Gastrocnemius medialis (tissue), 4 donors: ENCODE measurements at regions of chr15 and their contacts with region 1.

Region 1: DNA sequence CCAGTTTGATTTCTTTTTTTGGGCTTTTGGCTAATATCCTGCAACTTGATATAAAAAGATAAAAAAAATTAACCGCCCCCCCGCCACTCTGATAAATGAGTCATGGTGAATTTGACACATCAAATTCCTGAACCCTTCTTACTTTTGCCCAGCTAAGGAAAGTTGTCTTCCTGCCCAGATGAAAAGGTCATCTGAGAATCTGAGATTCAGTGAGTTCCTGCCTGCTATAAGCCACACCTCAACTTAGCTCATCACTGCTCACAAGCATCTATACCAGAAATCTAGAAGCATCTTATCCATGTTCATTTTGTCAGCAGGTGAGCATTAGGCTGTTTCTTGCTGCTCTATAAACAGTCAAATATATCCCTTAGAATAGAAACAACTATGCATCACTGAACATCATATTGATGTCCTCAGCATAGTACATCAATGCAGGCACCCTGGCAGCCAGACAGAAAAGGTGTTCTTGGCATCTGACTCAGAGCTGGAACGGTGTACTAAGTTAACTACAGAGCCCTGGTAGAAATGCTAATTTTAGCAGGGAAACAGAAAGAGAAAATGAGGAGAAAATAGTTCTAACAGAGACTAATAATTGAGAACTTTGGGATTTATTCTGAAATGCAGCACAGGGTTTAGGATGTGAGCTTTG is 77.1 kb downstream of the SEMA6D start:
- DNase-seq: no peak
- ATAC-seq: no peak
- H3K4me3 ChIP-seq: no peak overlapping the region
- H3K27ac ChIP-seq: no peak overlapping the region
- H3K4me1 ChIP-seq: peaks cover 8 to 21% of the 10 kb centered on the region in 2 donors
- H3K27me3 ChIP-seq: no peaks in the 10 kb centered on the region
- CTCF ChIP-seq: no peak
- POLR2A ChIP-seq: no peak

Region 2: DNA sequence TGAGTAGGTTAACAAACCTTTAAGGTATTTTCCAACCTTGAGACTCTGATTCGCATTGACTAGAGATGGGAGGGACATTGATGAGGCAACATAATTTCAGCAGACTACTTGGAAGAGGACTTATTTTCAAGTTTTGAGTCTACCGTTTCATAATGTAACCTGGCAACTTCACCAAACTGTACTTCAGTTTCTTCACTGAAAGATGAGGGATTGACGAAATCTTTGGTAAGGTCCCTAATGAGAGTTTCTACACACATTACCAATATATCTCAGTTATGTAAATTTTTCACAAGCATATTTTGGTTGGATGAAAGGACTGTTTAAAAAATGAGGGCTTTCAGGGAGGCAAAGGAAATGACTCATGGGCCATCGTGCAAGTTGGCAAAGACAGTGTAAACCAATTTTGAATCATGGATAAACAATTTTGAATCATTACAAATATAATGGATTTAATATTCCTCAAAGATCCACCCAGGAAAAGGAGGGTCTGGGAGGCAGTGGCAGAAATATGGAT is 105.8 kb before region 1 on chr15:
- in situ Hi-C with region 1: no loop called
- intact Hi-C with region 1: no loop called
- DNase-seq: no peak
- ATAC-seq: no peak
- H3K4me3 ChIP-seq: no peak overlapping the region
- H3K27ac ChIP-seq: no peak overlapping the region
- H3K4me1 ChIP-seq: no peaks in the 10 kb centered on the region
- H3K27me3 ChIP-seq: no peaks in the 10 kb centered on the region
- CTCF ChIP-seq: no peak
- POLR2A ChIP-seq: no peak

Region 3: GRCh38 chr15:47857776-47858167 is 63.4 kb after region 1 on chr15:
- in situ Hi-C with region 1: loop called in 1 of 4 experiments (anchors 10 kb)
- intact Hi-C with region 1: no loop called
- DNase-seq: no peak
- ATAC-seq: no peak
- H3K4me3 ChIP-seq: no peak overlapping the region
- H3K27ac ChIP-seq: no peak overlapping the region
- H3K4me1 ChIP-seq: no peaks in the 10 kb centered on the region
- H3K27me3 ChIP-seq: no peaks in the 10 kb centered on the region
- CTCF ChIP-seq: no peak
- POLR2A ChIP-seq: no peak